GM12878 (cell line): ENCODE measurements at regions of chr17 and their contacts with region 1.

Region 1: DNA sequence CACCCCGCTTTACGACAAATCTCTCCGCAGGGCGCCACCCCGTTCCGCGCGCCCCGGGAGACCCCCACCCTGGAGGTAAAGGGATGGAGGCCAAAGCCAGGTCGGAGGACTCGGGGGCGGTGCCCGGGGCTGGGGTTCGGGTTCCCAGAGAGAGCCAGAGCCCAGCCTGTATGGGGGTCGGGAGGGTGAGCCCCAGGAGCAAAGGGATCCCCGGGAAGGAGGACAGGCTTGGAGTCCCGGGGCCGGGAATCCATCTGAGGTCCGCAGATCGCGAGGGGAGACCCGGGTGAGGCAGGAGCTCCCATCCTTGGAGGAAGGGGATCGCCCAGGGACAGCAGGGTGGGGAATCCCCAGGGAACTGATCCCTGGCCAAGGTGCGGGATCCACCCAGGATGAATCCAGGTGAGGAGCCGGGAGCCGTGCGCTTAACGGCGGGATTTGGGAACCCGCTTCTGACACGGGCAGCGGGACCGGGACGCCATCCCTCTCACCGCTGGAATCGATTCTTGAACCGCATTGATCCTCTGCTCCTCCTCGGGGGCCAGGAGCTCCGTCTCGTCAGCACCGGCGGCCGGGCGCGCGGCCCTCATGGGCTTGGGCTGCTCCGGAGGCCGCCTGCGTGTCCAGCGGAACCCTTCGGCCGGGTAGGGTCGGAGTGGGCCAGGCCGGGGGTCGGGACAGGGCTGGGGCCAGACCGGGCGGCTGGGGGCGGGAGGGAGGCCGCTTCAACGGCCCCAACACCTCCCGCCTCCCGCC is at the start of gene MMD:
- DNase-seq: no peak
- ATAC-seq: peak; percentile 10
- H3K4me3 ChIP-seq: peak within 1 kb of the TSS; percentile 94
- H3K27ac ChIP-seq: peak within 1 kb of the TSS; percentile 91
- H3K4me1 ChIP-seq: peaks cover 37% of the 10 kb centered on the region
- H3K27me3 ChIP-seq: no peaks in the 10 kb centered on the region
- CTCF ChIP-seq: no peak
- EP300 ChIP-seq: no peak
- POLR2A ChIP-seq: peak; percentile 67; the same call in 1 of the 2 replicates
- RAD21 ChIP-seq: no peak
- polyA plus RNA-seq, gene MMD: 8.0 to 12.1 TPM

Region 2: DNA sequence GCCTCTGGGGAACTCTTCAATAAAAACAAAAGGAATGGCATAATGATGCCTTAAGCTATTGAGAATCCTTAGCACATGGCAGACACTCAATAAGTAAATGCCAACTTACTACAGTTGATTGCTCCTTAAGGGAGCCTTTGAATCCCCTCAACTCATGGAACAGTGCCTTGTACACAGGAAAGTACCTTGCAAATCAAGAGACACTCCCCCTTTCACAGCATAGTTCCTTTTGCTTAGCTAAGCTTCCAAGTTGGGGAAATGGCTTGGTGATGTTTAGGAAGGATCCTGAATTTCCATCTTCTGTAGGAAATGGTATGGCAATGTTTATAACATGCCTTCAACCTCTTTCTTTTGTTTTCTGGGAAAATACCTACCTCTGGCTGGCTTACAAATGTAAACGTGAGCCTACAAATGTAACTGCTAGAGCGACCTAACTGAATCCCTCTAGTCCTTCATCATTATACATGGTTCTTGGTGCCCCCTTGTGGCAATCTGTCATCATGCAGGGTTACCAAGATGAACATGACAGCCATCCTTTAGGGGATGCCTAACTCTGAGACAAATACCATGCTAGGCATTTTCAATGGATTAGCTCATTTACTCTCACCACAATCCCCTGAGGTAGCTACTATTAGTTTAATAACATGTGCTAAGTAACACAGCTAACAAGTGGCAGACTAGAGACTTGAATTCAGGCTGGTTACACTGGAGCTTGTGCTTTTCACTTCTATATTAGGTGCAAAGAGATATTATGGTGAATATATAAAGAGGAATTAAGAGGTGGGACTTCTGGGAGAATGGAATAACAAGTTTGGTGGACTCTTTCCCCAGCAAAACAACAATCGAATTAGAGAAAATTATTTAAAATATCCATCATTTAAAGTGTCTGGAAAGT is 64.7 kb before region 1 on chr17:
- CTCF ChIA-PET with region 1: interaction called, 7 read pairs
- POLR2A ChIA-PET with region 1: no interaction called
- RAD21 ChIA-PET with region 1: interaction called, 6 read pairs
- SMC1A ChIA-PET with region 1: interaction called, 20 read pairs
- in situ Hi-C with region 1: no loop called
- intact Hi-C with region 1: no loop called
- DNase-seq: peak; percentile 28
- ATAC-seq: peak; percentile 100
- H3K4me3 ChIP-seq: no peak overlapping the region
- H3K27ac ChIP-seq: no peak overlapping the region
- H3K4me1 ChIP-seq: no peaks in the 10 kb centered on the region
- H3K27me3 ChIP-seq: no peaks in the 10 kb centered on the region; a peak in 1 of 4 replicates
- CTCF ChIP-seq: peak; percentile 74 to 87 (median 84)
- EP300 ChIP-seq: no peak
- POLR2A ChIP-seq: no peak
- RAD21 ChIP-seq: peak; percentile 71

Region 3: GRCh38 chr17:55437159-55437605 is 15.8 kb after region 1 on chr17:
- CTCF ChIA-PET with region 1: interaction called, 5 read pairs
- POLR2A ChIA-PET with region 1: interaction called, 106 read pairs
- RAD21 ChIA-PET with region 1: interaction called, 99 read pairs
- SMC1A ChIA-PET with region 1: interaction called, 359 read pairs
- in situ Hi-C with region 1: no loop called
- intact Hi-C with region 1: loop called (anchors 1 kb)
- DNase-seq: peak; percentile 93
- ATAC-seq: peak; percentile 71
- H3K4me3 ChIP-seq: peak overlapping the region; percentile 36
- H3K27ac ChIP-seq: peak overlapping the region; percentile 72
- H3K4me1 ChIP-seq: peaks cover 23% of the 10 kb centered on the region
- H3K27me3 ChIP-seq: no peaks in the 10 kb centered on the region
- CTCF ChIP-seq: no peak
- EP300 ChIP-seq: peak; percentile 4 to 70; a peak in 2 of 4 replicates
- POLR2A ChIP-seq: no peak
- RAD21 ChIP-seq: peak; percentile 25; the same call in 1 of the 2 replicates

Region 4: DNA sequence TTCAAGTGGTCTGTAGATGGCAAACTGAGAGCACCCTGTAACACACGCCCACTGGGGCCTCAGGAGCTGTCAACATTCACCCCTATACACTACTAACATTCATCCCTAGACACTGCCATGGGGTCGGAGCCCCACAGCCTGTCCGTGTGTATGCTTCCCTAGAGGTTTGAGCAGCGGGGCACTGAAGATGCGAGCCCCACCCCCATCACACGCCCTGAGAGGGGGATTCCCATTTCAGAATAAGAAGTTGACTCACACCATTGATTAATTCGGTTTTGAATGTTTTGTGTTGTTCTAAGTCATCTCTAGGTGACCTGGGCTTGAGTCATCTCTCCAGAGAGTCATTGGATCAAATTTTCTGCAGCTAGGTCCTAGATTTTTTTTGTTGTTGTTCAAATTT is 37.6 kb after region 1 on chr17:
- CTCF ChIA-PET with region 1: interaction called, 3 read pairs
- POLR2A ChIA-PET with region 1: interaction called, 4 read pairs
- RAD21 ChIA-PET with region 1: interaction called, 15 read pairs
- SMC1A ChIA-PET with region 1: interaction called, 46 read pairs
- in situ Hi-C with region 1: no loop called
- intact Hi-C with region 1: loop called (anchors 2 kb)
- DNase-seq: no peak
- ATAC-seq: peak; percentile 87
- H3K4me3 ChIP-seq: no peak overlapping the region
- H3K27ac ChIP-seq: no peak overlapping the region
- H3K4me1 ChIP-seq: peaks cover 15% of the 10 kb centered on the region
- H3K27me3 ChIP-seq: no peaks in the 10 kb centered on the region
- CTCF ChIP-seq: no peak
- EP300 ChIP-seq: peak; percentile 40 to 49; a peak in 2 of 4 replicates
- POLR2A ChIP-seq: no peak
- RAD21 ChIP-seq: no peak

Region 5: GRCh38 chr17:55480631-55481315 is 59.4 kb after region 1 on chr17:
- CTCF ChIA-PET with region 1: interaction called, 3 read pairs
- POLR2A ChIA-PET with region 1: interaction called, 3 read pairs
- RAD21 ChIA-PET with region 1: interaction called, 4 read pairs
- SMC1A ChIA-PET with region 1: interaction called, 19 read pairs
- in situ Hi-C with region 1: no loop called
- intact Hi-C with region 1: no loop called
- DNase-seq: no peak
- ATAC-seq: no peak
- H3K4me3 ChIP-seq: no peak overlapping the region
- H3K27ac ChIP-seq: no peak overlapping the region
- H3K4me1 ChIP-seq: no peaks in the 10 kb centered on the region; the same call in 1 of the 2 replicates
- H3K27me3 ChIP-seq: no peaks in the 10 kb centered on the region
- CTCF ChIP-seq: no peak
- EP300 ChIP-seq: no peak
- POLR2A ChIP-seq: no peak
- RAD21 ChIP-seq: no peak

Region 6: GRCh38 chr17:55527540-55528118 is 106.3 kb after region 1 on chr17:
- CTCF ChIA-PET with region 1: no interaction called
- POLR2A ChIA-PET with region 1: no interaction called
- RAD21 ChIA-PET with region 1: no interaction called
- SMC1A ChIA-PET with region 1: no interaction called
- in situ Hi-C with region 1: no loop called
- intact Hi-C with region 1: no loop called
- DNase-seq: no peak
- ATAC-seq: 0 out of 3 replicates have a peak, but pooled peaks have one; percentile 18
- H3K4me3 ChIP-seq: no peak overlapping the region
- H3K27ac ChIP-seq: no peak overlapping the region
- H3K4me1 ChIP-seq: 0 out of 2 replicates have a peak, but pooled peaks cover 3% of the 10 kb centered on the region
- H3K27me3 ChIP-seq: no peaks in the 10 kb centered on the region; a peak in 1 of 4 replicates
- CTCF ChIP-seq: peak; percentile 22 to 45 (median 44); a peak in 5 of 6 replicates
- EP300 ChIP-seq: no peak
- POLR2A ChIP-seq: no peak
- RAD21 ChIP-seq: peak; percentile 61

Region 7: GRCh38 chr17:56125830-56126819 is 704.8 kb after region 1 on chr17:
- CTCF ChIA-PET with region 1: no interaction called
- POLR2A ChIA-PET with region 1: no interaction called
- RAD21 ChIA-PET with region 1: no interaction called
- SMC1A ChIA-PET with region 1: no interaction called
- in situ Hi-C with region 1: no loop called
- intact Hi-C with region 1: no loop called
- DNase-seq: no peak
- ATAC-seq: no peak
- H3K4me3 ChIP-seq: no peak overlapping the region
- H3K27ac ChIP-seq: no peak overlapping the region
- H3K4me1 ChIP-seq: no peaks in the 10 kb centered on the region
- H3K27me3 ChIP-seq: no peaks in the 10 kb centered on the region
- CTCF ChIP-seq: peak; percentile 17 to 25 (median 21); a peak in 2 of 6 replicates
- EP300 ChIP-seq: no peak
- POLR2A ChIP-seq: no peak
- RAD21 ChIP-seq: peak; percentile 55